ENCODE measurements at regions of chrX and their contacts with region 1.

Region 1: GRCh38 chrX:54999717-55000598 is at the start of gene APEX2:
- DNase-seq: peak; percentile 81

Region 2: GRCh38 chrX:54639346-54640102 is 360.4 kb before region 1 on chrX:
- CTCF ChIA-PET with region 1: no interaction called
- POLR2A ChIA-PET with region 1: interaction called, 14 read pairs
- DNase-seq: peak; percentile 83

Region 3: GRCh38 chrX:54808605-54809483 is 191.1 kb before region 1 on chrX:
- CTCF ChIA-PET with region 1: no interaction called
- POLR2A ChIA-PET with region 1: interaction called, 12 read pairs
- DNase-seq: peak; percentile 95

Region 4: GRCh38 chrX:54921427-54922021 is 78.4 kb before region 1 on chrX:
- CTCF ChIA-PET with region 1: no interaction called
- POLR2A ChIA-PET with region 1: interaction called, 15 read pairs
- DNase-seq: peak; percentile 39

Region 5: DNA sequence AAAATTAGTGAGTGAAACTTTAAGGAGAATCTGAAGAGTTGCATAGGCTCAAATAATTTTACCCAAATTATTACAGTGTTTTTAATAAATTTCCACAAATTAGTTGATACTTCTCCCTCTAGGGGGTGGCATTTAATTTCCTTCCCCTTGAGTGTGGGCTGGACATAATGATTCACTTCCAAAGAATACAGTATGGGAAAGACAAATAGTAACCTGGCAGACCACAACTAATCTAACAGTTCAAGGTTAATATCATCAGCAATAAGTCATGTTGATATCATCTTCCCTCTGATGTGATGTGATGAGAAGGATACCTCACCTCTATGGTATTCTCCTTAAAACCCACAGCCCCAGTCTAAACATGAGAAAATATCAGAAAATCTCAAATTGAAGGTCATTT is 21.5 kb before region 1 on chrX:
- CTCF ChIA-PET with region 1: no interaction called
- POLR2A ChIA-PET with region 1: interaction called, 11 read pairs
- DNase-seq: no peak